GM18951 (cell line): ENCODE measurements at regions of chrX and their contacts with region 1.

Region 1: GRCh38 chrX:107729547-107730297 is 45.9 kb downstream of the TSC22D3 start:
- POLR2A ChIP-seq: no peak

Region 2: GRCh38 chrX:107672955-107673378 is 56.8 kb before region 1 on chrX:
- in situ Hi-C with region 1: loop called (anchors 10 kb)
- POLR2A ChIP-seq: no peak